IMR-90 (cell line): ENCODE measurements at regions of chr18 and their contacts with region 1.

Region 1: DNA sequence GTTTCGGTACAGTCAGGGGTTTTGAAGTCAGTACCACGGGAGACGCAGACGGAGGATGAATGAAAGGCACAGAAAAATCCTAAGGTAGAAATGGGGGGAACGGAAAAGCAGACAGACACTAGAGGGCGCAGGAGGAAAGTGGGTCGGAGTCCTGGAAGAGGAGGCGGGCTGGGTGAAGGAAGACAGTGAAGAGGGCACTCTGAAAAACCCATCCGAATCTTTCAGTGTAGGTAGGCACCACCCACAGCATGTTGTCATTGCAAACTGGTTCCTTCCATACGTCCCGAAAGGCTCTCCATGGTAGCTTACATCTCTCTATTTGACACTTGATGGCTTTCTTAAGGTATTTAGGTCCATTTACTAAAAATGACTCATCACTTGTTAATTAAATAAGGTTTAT is 18.5 kb upstream of the ZNF236 start:
- DNase-seq: peak; percentile 52
- ATAC-seq: peak; percentile 73
- H3K4me3 ChIP-seq: no peak overlapping the region
- H3K27ac ChIP-seq: no peak overlapping the region
- H3K4me1 ChIP-seq: no peaks in the 10 kb centered on the region
- H3K27me3 ChIP-seq: no peaks in the 10 kb centered on the region
- CTCF ChIP-seq: peak; percentile 79
- POLR2A ChIP-seq: no peak
- RAD21 ChIP-seq: peak; percentile 62

Region 2: GRCh38 chr18:76821875-76822509 is 18.2 kb after region 1 on chr18:
- CTCF ChIA-PET with region 1: interaction called, 18 read pairs
- POLR2A ChIA-PET with region 1: no interaction called
- dilution Hi-C with region 1: no loop called
- in situ Hi-C with region 1: no loop called
- intact Hi-C with region 1: no loop called
- DNase-seq: peak; percentile 35
- ATAC-seq: peak; percentile 64
- H3K4me3 ChIP-seq: peak overlapping the region; percentile 93
- H3K27ac ChIP-seq: peak overlapping the region; percentile 98
- H3K4me1 ChIP-seq: peaks cover 6% of the 10 kb centered on the region; the same call in 1 of the 2 replicates
- H3K27me3 ChIP-seq: no peaks in the 10 kb centered on the region
- CTCF ChIP-seq: no peak
- POLR2A ChIP-seq: no peak
- RAD21 ChIP-seq: no peak

Region 3: DNA sequence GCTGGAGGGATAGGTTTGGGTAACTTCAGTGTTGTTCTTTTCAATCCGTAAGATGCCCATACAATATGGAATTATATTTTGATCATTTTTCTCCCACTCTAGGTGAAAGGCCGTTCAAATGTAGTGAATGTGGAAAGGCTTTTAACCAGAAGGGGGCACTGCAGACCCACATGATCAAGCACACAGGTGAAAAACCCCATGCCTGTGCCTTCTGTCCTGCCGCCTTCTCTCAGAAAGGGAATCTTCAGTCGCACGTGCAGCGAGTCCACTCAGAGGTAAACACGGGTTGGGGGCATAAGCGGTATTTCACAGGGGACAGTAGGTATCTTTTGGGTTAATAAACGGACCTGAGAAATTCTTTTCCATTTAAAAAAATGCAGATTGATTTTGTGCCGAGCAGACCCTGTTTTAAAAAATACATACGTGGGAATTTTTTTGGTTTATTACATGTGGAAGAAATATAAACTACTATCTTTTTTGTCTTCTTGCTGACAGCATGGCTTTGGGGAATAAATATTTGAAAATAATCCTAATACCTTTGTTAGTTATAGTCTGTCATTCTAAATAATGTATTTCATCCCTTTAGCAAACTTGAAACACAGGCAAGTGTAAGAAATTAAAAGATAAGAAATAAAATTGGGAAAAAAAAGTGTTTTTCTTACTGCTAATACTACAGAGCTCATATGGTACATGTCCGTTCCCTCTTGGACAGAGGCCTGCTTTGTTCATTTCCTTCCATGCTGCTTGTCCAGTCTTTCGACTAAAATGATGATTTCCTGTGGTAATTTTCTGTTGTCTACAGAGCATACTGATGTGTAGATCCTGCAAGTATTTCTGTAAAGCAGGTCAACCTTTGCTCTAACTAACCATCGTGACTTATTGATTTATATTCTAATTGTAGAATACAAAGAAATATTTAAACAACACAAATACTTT is 71.8 kb after region 1 on chr18:
- CTCF ChIA-PET with region 1: no interaction called
- POLR2A ChIA-PET with region 1: no interaction called
- dilution Hi-C with region 1: no loop called
- in situ Hi-C with region 1: no loop called
- intact Hi-C with region 1: loop called (anchors 2 kb)
- DNase-seq: peak; percentile 43
- ATAC-seq: peak; percentile 66; the same call in 1 of the 2 replicates
- H3K4me3 ChIP-seq: no peak overlapping the region
- H3K27ac ChIP-seq: no peak overlapping the region
- H3K4me1 ChIP-seq: no peaks in the 10 kb centered on the region
- H3K27me3 ChIP-seq: no peaks in the 10 kb centered on the region
- CTCF ChIP-seq: peak; percentile 57
- POLR2A ChIP-seq: no peak
- RAD21 ChIP-seq: peak; percentile 53

Region 4: DNA sequence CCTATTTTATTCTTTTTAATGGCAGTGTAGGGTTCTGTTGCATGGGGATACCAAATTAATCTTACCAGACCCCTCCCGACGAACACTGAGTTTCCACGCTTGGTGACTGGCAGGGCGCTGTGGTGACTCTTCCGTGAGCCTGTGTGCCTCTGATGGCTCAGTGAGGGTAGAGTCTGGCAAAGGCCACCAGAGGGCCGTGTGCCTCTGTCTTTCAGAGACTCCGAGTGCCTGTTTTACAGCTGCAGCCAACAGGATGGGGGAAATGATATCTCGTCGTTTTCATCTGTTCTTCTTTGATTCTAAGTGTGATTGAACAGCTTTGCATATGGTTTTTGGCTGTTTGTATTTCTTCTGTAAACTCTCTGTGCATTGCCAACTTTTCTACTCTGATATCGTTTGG is 118.3 kb after region 1 on chr18:
- CTCF ChIA-PET with region 1: interaction called, 4 read pairs
- POLR2A ChIA-PET with region 1: no interaction called
- dilution Hi-C with region 1: no loop called
- in situ Hi-C with region 1: no loop called
- intact Hi-C with region 1: loop called (anchors 5 kb)
- DNase-seq: peak; percentile 58
- ATAC-seq: peak; percentile 93
- H3K4me3 ChIP-seq: no peak overlapping the region
- H3K27ac ChIP-seq: no peak overlapping the region
- H3K4me1 ChIP-seq: peaks cover 5% of the 10 kb centered on the region
- H3K27me3 ChIP-seq: no peaks in the 10 kb centered on the region
- CTCF ChIP-seq: peak; percentile 63
- POLR2A ChIP-seq: no peak
- RAD21 ChIP-seq: peak; percentile 68

Region 5: GRCh38 chr18:76982841-76983587 is 179.2 kb after region 1 on chr18:
- CTCF ChIA-PET with region 1: interaction called, 5 read pairs
- POLR2A ChIA-PET with region 1: no interaction called
- dilution Hi-C with region 1: no loop called
- in situ Hi-C with region 1: loop called (anchors 10 kb)
- intact Hi-C with region 1: loop called (anchors 1 kb)
- DNase-seq: peak; percentile 67
- ATAC-seq: peak; percentile 100
- H3K4me3 ChIP-seq: no peak overlapping the region
- H3K27ac ChIP-seq: no peak overlapping the region
- H3K4me1 ChIP-seq: no peaks in the 10 kb centered on the region; the same call in 1 of the 2 replicates
- H3K27me3 ChIP-seq: peaks cover 4% of the 10 kb centered on the region
- CTCF ChIP-seq: peak; percentile 92
- POLR2A ChIP-seq: no peak
- RAD21 ChIP-seq: peak; percentile 71

Region 6: GRCh38 chr18:77054606-77055428 is 251.0 kb after region 1 on chr18:
- CTCF ChIA-PET with region 1: no interaction called
- POLR2A ChIA-PET with region 1: no interaction called
- dilution Hi-C with region 1: no loop called
- in situ Hi-C with region 1: no loop called
- intact Hi-C with region 1: loop called (anchors 1 kb)
- DNase-seq: peak; percentile 93
- ATAC-seq: peak; percentile 99
- H3K4me3 ChIP-seq: no peak overlapping the region; the same call in 1 of the 2 replicates
- H3K27ac ChIP-seq: peak overlapping the region; percentile 77
- H3K4me1 ChIP-seq: peaks cover 19% of the 10 kb centered on the region
- H3K27me3 ChIP-seq: no peaks in the 10 kb centered on the region
- CTCF ChIP-seq: peak; percentile 97
- POLR2A ChIP-seq: no peak
- RAD21 ChIP-seq: peak; percentile 82